ENCODE measurements at regions of chr9 and their contacts with region 1.

Region 1: GRCh38 chr9:4382722-4383317 is 83.0 kb upstream of the GLIS3 start:
- DNase-seq: no peak
- H3K4me3 ChIP-seq: no peak overlapping the region
- H3K27ac ChIP-seq: no peak overlapping the region
- H3K4me1 ChIP-seq: no peaks in the 10 kb centered on the region
- CTCF ChIP-seq: peak; percentile 57

Region 2: GRCh38 chr9:4640027-4640426 is 257.2 kb after region 1 on chr9:
- CTCF ChIA-PET with region 1: no interaction called
- POLR2A ChIA-PET with region 1: no interaction called
- intact Hi-C with region 1: loop called (anchors 10 kb)
- DNase-seq: no peak
- H3K4me3 ChIP-seq: no peak overlapping the region
- H3K27ac ChIP-seq: no peak overlapping the region
- H3K4me1 ChIP-seq: no peaks in the 10 kb centered on the region
- CTCF ChIP-seq: peak; percentile 45

Measured in OCI-LY7 (cell line).